Left ventricle myocardium superior (tissue), 1 donor: ENCODE measurements at regions of chr20 and their contacts with region 1.

Region 1: DNA sequence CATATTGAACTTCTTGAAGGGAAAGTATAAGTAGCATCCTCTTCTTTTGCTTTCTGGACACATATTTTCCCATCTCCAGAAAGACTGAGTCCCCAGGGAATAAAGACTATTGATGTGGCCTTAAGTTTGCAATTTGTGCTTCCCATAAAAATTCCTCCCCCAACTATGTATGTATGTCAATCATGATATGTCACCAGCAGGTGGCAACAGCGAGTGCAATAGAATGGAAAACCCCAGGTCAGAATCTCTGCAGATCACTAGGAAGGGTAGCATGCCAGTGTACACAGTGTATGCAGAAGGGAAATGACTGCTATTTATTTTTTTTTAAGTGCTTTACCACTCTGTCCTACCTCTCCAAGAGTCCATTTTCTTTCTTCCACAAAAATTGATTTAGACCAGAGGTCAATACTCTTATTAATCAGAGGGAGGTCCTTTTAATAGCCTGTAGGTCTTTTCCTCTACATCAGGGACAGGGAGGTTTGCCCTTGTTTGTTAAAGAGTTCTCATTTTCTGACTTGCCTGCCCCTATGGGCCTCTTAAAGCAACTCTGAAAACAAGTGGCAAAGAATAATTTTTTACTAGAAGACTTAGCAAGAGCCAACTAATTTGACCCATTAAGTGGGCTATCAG is 61.4 kb downstream of the BMP2 start:
- DNase-seq: peak; percentile 35
- ATAC-seq: peak; percentile 75

Region 2: DNA sequence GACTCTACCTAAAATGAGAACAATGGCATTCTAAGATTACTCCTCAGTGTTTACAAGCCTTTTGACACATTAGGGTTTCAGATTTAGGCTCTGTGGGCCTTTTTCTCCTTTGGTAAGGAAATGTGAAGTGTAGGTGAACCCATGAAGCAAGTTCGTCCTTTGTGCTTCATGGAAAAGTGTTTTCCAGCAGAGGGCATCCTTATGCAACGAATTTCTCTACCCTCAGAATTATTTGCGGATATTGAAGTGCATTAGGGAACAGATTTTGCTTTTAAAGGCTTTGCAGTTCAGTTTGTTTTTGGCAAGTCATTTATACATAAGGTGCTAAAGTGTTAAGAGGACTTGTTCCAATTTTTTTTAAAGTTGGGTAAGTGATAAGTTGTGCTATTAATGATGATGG is 650.4 kb before region 1 on chr20:
- intact Hi-C with region 1: loop called (anchors 10 kb)
- DNase-seq: no peak
- ATAC-seq: no peak

Region 3: GRCh38 chr20:6395695-6396094 is 433.2 kb before region 1 on chr20:
- intact Hi-C with region 1: no loop called
- DNase-seq: no peak
- ATAC-seq: no peak

Region 4: GRCh38 chr20:6767536-6768227 is 61.2 kb before region 1 on chr20 and contains the start of gene BMP2:
- intact Hi-C with region 1: no loop called
- DNase-seq: peak; percentile 84
- ATAC-seq: peak; percentile 82
- total RNA-seq, gene BMP2: 3.0 TPM